ENCODE measurements at regions of chr5 and their contacts with region 1.

Region 1: DNA sequence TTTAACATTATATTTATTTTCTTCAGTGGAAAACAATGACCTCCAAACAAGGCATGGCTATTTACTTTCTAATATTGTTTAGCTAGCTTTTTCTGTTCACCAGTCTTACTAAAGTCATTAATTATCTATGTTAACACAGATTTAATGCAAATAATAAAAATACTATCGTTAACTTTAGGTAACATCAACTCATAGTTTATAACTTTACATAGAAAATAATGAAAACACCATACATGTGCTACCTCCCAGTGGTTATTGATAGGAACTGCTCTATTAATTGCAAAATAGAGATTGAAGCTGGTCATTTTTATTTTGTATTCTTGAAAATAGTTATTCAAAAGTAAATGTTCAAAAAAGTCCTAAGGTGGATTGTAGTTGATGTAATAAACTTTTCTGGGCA is 78.3 kb upstream of the HCN1 start:
- DNase-seq: no peak
- ATAC-seq: peak; percentile 69
- H3K4me3 ChIP-seq: no peak overlapping the region
- H3K27ac ChIP-seq: no peak overlapping the region
- H3K4me1 ChIP-seq: no peaks in the 10 kb centered on the region
- H3K27me3 ChIP-seq: no peaks in the 10 kb centered on the region
- CTCF ChIP-seq: peak in 2 of 3 experiments; percentile 20 to 21; a peak in 3 of 6 replicates
- EP300 ChIP-seq: no peak
- POLR2A ChIP-seq: no peak
- RAD21 ChIP-seq: peak; percentile 44; the same call in 1 of the 2 replicates

Region 2: DNA sequence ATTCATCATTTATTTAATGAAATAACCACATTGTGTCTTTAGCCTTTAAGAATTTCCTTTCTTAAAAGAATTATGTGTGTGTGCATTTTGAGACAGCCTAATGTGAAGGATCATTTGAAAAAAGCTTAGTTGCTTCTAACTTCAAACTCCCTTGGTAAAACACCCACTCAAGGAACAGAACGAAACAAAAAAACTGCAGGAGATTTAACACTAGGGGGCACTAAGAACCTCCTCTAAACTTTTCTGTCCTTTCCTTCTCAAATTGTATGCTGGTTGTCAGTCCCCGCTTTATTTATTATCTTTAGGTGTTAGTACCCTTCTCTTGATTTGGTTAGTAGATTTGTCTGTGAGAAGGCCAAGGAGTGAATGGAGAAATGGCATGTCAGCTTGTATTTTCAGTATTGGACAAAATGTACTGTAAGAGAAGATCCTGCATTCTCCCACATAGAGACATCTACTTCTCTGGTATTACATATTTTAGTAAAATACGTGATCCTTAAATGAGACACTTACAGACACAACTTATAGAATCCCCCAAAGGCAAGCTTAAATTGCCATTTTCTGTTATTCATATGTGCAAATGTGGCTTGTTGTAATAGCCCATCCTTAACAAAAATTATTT is 736.1 kb before region 1 on chr5:
- CTCF ChIA-PET with region 1: interaction called, 7 read pairs
- POLR2A ChIA-PET with region 1: no interaction called
- RAD21 ChIA-PET with region 1: interaction called, 7 read pairs
- SMC1A ChIA-PET with region 1: interaction called, 24 read pairs
- in situ Hi-C with region 1: no loop called
- intact Hi-C with region 1: loop called (anchors 5 kb)
- DNase-seq: no peak
- ATAC-seq: peak; percentile 88
- H3K4me3 ChIP-seq: no peak overlapping the region
- H3K27ac ChIP-seq: no peak overlapping the region
- H3K4me1 ChIP-seq: no peaks in the 10 kb centered on the region
- H3K27me3 ChIP-seq: no peaks in the 10 kb centered on the region
- CTCF ChIP-seq: peak; percentile 51 to 60 (median 53); a peak in 5 of 6 replicates
- EP300 ChIP-seq: no peak
- POLR2A ChIP-seq: no peak
- RAD21 ChIP-seq: peak; percentile 75